ENCODE measurements at regions of chr4 and their contacts with region 1.

Region 1: GRCh38 chr4:74133786-74134499 is 24.0 kb upstream of the MTHFD2L start:
- DNase-seq: no peak
- H3K4me3 ChIP-seq: no peak overlapping the region
- H3K27ac ChIP-seq: no peak overlapping the region
- H3K4me1 ChIP-seq: no peaks in the 10 kb centered on the region
- H3K27me3 ChIP-seq: no peaks in the 10 kb centered on the region
- CTCF ChIP-seq: peak; percentile 73 to 79 (median 77)
- EP300 ChIP-seq: no peak
- POLR2A ChIP-seq: no peak

Region 2: GRCh38 chr4:73593631-73594241 is 540.2 kb before region 1 on chr4:
- intact Hi-C with region 1: loop called (anchors 10 kb)
- DNase-seq: no peak
- H3K4me3 ChIP-seq: no peak overlapping the region
- H3K27ac ChIP-seq: no peak overlapping the region
- H3K4me1 ChIP-seq: peaks cover 0 to 16% (median 13%) of the 10 kb centered on the region in 4 donors
- H3K27me3 ChIP-seq: no peaks in the 10 kb centered on the region
- CTCF ChIP-seq: peak; percentile 41 to 60 (median 57)
- EP300 ChIP-seq: no peak
- POLR2A ChIP-seq: no peak

Region 3: GRCh38 chr4:73662709-73663546 is 471.0 kb before region 1 on chr4:
- intact Hi-C with region 1: loop called (anchors 5 kb)
- DNase-seq: no peak
- H3K4me3 ChIP-seq: no peak overlapping the region
- H3K27ac ChIP-seq: no peak overlapping the region
- H3K4me1 ChIP-seq: peaks cover 0 to 6% (median 3%) of the 10 kb centered on the region in 4 donors
- H3K27me3 ChIP-seq: no peaks in the 10 kb centered on the region
- CTCF ChIP-seq: peak; percentile 25 to 42 (median 33)
- EP300 ChIP-seq: no peak
- POLR2A ChIP-seq: no peak

Region 4: GRCh38 chr4:73729534-73730165 is 404.3 kb before region 1 on chr4:
- intact Hi-C with region 1: loop called (anchors 5 kb)
- DNase-seq: no peak
- H3K4me3 ChIP-seq: no peak overlapping the region
- H3K27ac ChIP-seq: no peak overlapping the region
- H3K4me1 ChIP-seq: peaks cover 0 to 14% (median 4%) of the 10 kb centered on the region in 4 donors
- H3K27me3 ChIP-seq: no peaks in the 10 kb centered on the region
- CTCF ChIP-seq: peak; percentile 73 to 87 (median 82)
- EP300 ChIP-seq: no peak
- POLR2A ChIP-seq: no peak

Region 5: DNA sequence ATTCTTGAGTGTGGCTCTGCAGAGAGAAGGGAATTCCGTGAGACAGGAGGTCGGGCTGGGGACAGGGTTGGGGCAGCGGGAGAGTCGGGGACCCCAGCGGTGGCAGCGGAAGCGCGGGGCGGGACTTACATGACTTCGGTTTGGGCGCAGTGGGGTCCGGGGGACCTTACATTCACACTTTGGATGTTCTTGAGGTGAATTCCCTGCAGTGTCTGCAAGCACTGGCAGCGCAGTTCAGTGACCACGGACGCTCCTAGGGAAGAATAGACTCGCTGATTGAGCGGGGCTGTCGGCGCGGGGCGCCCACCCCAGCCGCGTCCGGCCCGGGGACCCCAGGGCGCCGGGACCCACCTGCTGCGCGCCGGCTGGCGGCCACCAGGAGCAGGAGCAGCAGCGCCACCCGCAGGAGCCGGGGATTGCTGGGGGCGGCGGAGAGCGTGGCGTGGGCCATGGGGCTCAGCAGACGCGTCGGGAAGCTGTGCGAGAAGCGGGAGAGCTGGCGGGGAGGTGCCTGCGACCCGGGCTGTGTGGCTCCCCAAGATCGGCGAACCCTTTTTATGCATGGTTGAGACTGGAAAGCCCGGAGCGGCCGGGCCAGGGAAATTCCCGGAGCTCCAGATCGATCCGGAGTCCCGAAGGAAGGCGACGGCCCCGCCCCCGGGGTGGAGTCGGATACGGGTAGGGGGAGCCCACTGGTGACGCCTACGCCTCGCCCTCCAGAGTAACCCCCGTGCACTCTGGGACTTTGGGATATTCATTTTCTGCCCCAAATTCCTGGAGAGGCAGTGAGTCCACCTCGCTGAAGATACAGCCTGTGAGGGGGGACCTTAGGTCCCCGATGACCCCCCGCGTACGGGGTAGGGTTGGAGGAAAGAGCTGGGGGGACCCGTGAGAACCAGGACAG is 95.5 kb before region 1 on chr4 and contains the start of gene CXCL3:
- intact Hi-C with region 1: loop called (anchors 10 kb)
- DNase-seq: no peak
- H3K4me3 ChIP-seq: peak within 1 kb of the TSS; percentile 60 to 76 (median 70)
- H3K27ac ChIP-seq: peak within 1 kb of the TSS; percentile 45 to 60 (median 56)
- H3K4me1 ChIP-seq: peaks cover 7 to 22% (median 15%) of the 10 kb centered on the region in 4 donors
- H3K27me3 ChIP-seq: peaks cover 0 to 3% (median 0%) of the 10 kb centered on the region in 4 donors
- CTCF ChIP-seq: peak; percentile 29 to 45 (median 39)
- EP300 ChIP-seq: no peak
- POLR2A ChIP-seq: no peak
- total RNA-seq, gene CXCL3: 2.2 TPM in 1 of 4 donors, not detected in the others